Transverse colon (tissue), 4 donors: ENCODE measurements at regions of chr7 and their contacts with region 1.

Region 1: GRCh38 chr7:104862719-104863118 is 151.3 kb upstream of the KMT2E start:
- DNase-seq: no peak
- H3K4me3 ChIP-seq: no peak overlapping the region
- H3K27ac ChIP-seq: no peak overlapping the region
- H3K4me1 ChIP-seq: no peaks in the 10 kb centered on the region
- H3K27me3 ChIP-seq: no peaks in the 10 kb centered on the region
- CTCF ChIP-seq: no peak
- EP300 ChIP-seq: no peak
- POLR2A ChIP-seq: no peak

Region 2: GRCh38 chr7:104272767-104273384 is 589.8 kb before region 1 on chr7:
- in situ Hi-C with region 1: loop called in 1 of 4 experiments (anchors 25 kb)
- intact Hi-C with region 1: no loop called
- DNase-seq: no peak
- H3K4me3 ChIP-seq: no peak overlapping the region
- H3K27ac ChIP-seq: no peak overlapping the region
- H3K4me1 ChIP-seq: no peaks in the 10 kb centered on the region
- H3K27me3 ChIP-seq: no peaks in the 10 kb centered on the region
- CTCF ChIP-seq: peak; percentile 36 to 57 (median 50)
- EP300 ChIP-seq: no peak
- POLR2A ChIP-seq: no peak

Region 3: GRCh38 chr7:105589356-105590077 is 726.8 kb after region 1 on chr7:
- in situ Hi-C with region 1: no loop called
- intact Hi-C with region 1: no loop called
- DNase-seq: peak; percentile 35
- H3K4me3 ChIP-seq: no peak overlapping the region
- H3K27ac ChIP-seq: no peak overlapping the region
- H3K4me1 ChIP-seq: peaks cover 0 to 5% (median 0%) of the 10 kb centered on the region in 4 donors
- H3K27me3 ChIP-seq: no peaks in the 10 kb centered on the region
- CTCF ChIP-seq: peak; percentile 31 to 47 (median 42)
- EP300 ChIP-seq: no peak
- POLR2A ChIP-seq: no peak